Dendritic cell treated with granulocyte-macrophage colony-stimulating factor and Interleukin-4, amounts not matched to agents 40 ng/mL and 50 ng/mL, for 4 days (primary cell): ENCODE measurements at regions of chr4 and their contacts with region 1.

Region 1: DNA sequence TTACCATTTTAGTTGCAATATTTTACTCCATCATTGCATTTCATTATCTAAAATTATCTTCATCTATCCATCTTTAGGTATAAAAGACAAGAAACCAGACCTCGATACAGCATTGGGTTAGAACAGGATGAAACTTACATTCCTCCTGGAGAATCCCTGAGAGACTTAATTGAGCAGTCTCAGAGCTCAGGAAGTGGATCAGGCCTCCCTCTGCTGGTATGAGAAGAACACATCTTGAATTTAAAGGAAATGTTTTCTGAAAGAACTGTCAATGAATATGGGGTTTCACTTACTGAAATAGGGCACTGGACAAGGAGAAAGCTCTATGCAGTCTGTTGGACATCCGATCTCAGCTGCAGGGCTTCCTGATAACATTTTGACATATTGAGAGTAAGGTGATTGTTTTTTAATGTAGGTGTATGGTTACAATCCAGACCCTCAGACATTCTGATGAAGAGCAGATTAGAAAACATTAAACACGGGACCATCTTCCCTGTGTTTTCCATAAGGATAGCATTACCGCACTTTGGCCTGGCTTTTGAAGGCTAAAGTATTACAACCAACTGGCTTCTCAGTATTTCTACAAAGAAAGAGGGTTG is 367.2 kb downstream of the BMPR1B start:
- H3K4me3 Mint-ChIP-seq: no peak overlapping the region
- H3K27ac Mint-ChIP-seq: no peak overlapping the region
- H3K4me1 Mint-ChIP-seq: peaks cover 15% of the 10 kb centered on the region
- H3K27me3 Mint-ChIP-seq: no peaks in the 10 kb centered on the region

Region 2: GRCh38 chr4:94621491-94622080 is 503.4 kb before region 1 on chr4:
- intact Hi-C with region 1: loop called (anchors 1 kb)
- H3K4me3 Mint-ChIP-seq: no peak overlapping the region
- H3K27ac Mint-ChIP-seq: no peak overlapping the region
- H3K4me1 Mint-ChIP-seq: no peaks in the 10 kb centered on the region
- H3K27me3 Mint-ChIP-seq: no peaks in the 10 kb centered on the region